Left colon (tissue), 2 donors: ENCODE measurements at regions of chr2 and their contacts with region 1.

Region 1: DNA sequence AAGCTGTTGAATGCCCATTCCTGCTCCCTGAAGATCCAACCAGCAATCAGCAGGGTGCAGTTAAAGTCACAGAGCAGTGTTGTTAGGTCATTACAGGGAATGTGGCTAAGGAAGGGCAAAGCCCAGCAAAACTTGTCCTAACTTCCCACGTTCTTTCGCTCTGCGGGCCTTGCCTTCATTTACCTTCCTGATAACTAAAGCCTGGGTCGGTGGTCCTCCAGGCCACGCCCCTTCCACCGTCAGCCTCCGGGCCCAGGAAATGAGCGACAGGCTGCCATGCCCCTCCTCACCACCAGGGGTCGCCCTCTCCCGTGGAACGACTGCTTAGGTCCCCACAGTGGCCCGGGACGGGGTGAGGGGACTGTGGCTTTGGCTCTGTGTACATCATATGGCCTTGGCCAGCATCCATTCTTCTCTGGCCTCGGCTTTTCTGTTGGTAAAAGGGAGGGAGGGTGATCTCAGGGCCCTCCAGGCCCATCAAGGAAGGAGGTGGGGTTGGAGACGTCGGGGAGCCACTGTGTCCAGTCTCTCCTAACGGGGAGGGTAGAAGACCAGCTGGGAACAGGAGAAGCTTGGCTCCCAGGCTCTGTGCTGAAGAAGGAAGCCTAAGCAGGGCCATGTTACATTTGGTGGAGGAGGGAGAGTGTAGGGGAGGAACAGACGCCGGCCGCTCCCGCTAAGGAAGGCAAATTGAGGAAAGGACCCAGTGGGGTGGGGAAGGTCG is 2.2 kb downstream of the SH2D6 start:
- DNase-seq: peak; percentile 83 to 92
- ATAC-seq: peak; percentile 67

Region 2: DNA sequence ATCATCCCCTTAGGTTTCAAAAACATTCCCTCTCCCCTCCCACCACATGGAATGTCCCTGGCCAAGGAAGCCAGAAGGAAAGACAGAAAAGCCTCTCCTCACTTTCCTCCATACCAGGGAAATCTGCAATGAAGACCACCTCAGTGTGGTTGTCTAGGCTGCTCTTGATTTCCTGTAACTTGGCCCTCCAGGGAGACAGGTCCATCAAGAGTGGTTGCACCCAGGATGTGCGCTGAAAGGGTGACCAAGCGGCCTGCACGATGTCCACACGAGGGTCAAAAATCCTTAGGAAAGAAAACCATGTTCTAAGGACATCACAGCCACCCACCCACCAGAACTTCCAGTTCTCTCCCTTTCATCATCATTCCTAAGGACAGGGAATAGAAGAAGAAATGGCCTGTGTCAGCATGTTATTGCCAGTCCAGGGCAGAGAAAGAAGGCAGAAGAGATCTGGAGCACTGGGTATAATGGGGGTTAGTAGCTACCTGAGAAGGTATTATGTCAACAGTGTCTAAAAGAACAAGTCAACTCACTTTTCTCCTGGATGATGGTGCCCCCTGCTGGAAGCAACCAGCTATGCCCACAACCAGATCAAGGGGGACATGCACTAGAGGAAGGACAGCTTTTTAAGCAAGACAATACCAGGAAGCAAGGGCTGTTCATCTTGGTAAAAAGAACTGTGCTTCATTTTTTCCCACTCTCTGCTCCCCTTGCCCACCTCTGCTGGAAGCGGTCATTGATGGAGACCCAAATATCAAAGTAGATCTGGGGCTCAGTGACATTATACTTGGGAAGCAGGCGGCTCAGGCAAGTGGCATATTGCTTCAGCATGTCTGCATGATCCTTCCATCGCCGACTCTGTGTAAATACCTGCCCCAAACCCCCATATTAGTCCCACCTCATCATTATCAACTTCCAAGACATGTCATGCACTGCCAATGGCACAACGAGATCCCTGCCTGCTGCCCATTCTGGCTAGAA is 131.3 kb after region 1 on chr2:
- intact Hi-C with region 1: loop called (anchors 2 to 5 kb)
- DNase-seq: peak; percentile 74 to 86
- ATAC-seq: peak; percentile 78

Region 3: DNA sequence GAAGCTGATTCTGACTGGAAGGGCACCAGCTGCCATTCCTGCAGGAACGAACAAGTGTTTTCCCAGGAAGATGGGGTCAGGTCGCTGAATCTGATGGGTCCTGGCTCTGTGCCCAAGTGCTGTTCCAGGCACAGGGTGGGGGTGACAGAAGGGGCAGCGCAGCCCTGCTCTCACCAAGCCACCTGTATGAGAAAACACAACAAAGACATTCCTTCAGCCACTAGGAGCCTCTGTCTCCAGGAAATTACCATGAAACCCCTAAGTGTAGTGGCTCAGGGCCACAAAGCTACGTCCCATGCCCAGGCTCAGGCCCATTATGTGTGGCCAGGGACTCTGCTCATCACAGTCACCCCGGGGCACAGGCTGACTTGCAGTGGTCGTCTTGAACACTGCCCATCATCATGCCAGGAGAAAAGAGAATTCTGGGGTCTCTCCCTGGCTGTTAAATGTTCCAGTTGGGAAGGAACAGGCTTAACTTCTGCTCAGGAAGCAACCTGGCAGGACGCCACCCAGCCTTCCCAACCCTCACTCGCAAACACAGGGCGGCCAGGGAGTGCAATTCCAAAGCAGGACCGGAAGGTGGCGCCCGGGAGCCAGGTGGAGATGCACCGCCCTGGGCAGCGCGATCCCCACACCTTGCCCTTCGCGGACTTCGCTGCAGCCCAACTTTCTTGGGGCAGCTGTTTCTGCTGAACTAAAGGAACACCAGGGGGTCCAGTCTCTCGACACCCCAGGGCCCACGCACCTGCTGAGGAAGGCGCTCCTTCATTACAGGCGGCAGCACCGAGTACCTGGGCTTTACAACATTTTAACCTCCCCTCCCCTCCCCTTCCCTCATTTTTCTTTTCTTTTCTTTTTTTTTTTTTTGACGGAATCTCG is 258.3 kb after region 1 on chr2:
- intact Hi-C with region 1: no loop called
- DNase-seq: peak; percentile 76 to 90
- ATAC-seq: peak; percentile 98